KBM-7 (cell line): ENCODE measurements at regions of chr3 and their contacts with region 1.

Region 1: GRCh38 chr3:36677331-36678007 is 86.9 kb downstream of the DCLK3 start:
- DNase-seq: no peak

Region 2: DNA sequence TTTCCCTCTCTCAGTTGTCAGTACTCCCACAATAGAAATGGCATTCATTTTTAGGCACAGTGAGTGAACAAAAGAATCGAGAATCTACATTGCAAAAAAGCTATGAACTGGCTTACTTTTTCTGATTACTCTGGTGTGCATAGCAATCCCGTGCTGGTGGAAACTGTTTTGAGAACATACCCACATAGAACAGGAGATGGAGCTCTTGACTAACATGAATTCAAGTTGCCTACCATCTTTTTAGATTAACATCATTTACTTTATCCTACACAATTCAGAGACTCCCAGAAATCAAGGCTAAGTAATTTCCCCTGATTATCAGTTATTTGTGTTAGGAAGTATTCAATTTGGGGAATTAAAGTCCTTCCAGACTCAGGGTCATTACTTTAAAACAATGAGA is 711.6 kb before region 1 on chr3:
- in situ Hi-C with region 1: loop called (anchors 25 kb)
- DNase-seq: peak; percentile 36

Region 3: DNA sequence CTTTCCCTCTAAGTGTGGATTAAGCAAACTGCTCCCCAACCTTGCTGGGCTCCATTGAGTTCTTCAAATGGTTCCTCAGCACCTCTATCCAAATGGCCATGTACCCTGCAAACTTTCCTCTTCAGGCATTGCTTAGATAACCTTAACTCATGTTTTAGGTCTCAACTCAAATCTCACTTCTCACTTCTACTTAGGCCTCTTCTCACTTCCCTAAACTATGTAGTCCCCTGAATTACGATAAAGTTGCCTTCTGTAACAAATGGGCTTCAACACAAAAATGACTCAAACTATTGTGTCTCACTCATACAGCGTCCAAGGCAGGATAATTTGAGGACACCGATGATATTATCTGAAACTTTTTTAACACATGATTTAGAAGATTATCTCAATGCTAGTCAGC is 359.6 kb before region 1 on chr3:
- in situ Hi-C with region 1: no loop called
- DNase-seq: no peak